H1 (cell line): ENCODE measurements at regions of chr7 and their contacts with region 1.

Region 1: DNA sequence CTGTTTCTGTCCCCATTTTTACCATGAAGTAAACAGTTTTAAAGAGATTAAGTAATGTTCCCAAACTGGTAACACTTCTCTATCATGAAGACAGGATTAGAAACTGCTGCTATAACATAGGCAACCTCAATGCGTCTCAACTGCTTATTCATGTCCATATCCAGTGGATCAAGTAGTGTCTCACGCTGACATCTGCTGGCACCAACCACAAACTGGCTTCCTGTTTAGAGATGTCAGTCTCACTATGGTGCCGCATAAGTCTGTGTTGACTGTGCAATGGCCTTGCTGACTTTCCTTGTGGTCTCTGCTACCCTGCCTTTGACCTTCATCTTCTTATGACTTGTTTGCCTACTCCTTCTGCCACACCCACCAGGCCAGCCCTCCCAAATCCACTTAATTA is 369.6 kb upstream of the DPP6 start:
- DNase-seq: no peak
- H3K4me3 ChIP-seq: no peak overlapping the region
- H3K27ac ChIP-seq: no peak overlapping the region
- H3K4me1 ChIP-seq: no peaks in the 10 kb centered on the region
- H3K27me3 ChIP-seq: peaks cover 0 to 1% (median 0%) of the 10 kb centered on the region in 4 experiments; a peak in 1 of 7 replicates
- CTCF ChIP-seq: peak in 2 of 3 experiments; percentile 23 to 41; a peak in 2 of 4 replicates
- EP300 ChIP-seq: no peak
- POLR2A ChIP-seq: no peak
- RAD21 ChIP-seq: peak; percentile 57 to 66

Region 2: GRCh38 chr7:153381275-153382040 is 301.2 kb before region 1 on chr7:
- CTCF ChIA-PET with region 1: interaction called, 23 read pairs
- POLR2A ChIA-PET with region 1: no interaction called
- DNase-seq: peak; percentile 25 to 70
- H3K4me3 ChIP-seq: peak overlapping the region in 3 of 4 experiments; percentile 20 to 50 (median 34); a peak in 5 of 8 replicates
- H3K27ac ChIP-seq: no peak overlapping the region
- H3K4me1 ChIP-seq: peaks cover 0 to 2% (median 0%) of the 10 kb centered on the region in 4 experiments; a peak in 3 of 7 replicates
- H3K27me3 ChIP-seq: no peaks in the 10 kb centered on the region
- CTCF ChIP-seq: peak; percentile 81 to 90 (median 82)
- EP300 ChIP-seq: no peak
- POLR2A ChIP-seq: no peak
- RAD21 ChIP-seq: peak; percentile 98 to 99

Region 3: DNA sequence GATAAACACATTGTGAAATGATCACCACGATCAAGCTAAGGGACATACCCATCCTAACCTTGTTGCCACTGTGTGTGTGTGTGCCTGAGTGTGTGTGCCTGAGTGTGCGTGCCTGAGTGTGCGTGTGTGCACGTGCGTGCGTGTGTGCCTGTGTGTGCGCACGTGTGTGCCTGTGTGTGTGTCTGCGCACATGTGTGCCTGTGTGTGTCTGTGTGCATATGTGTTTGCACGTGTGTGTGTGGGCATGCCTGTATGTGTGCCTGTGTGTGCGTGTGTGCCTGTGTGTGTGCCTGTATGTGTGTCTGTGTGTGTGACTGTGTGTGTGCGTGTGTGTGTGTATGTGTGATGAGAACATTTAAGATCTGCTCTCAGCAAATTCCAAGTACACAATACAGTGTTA is 125.5 kb after region 1 on chr7:
- CTCF ChIA-PET with region 1: no interaction called
- POLR2A ChIA-PET with region 1: no interaction called
- DNase-seq: no peak
- H3K4me3 ChIP-seq: no peak overlapping the region
- H3K27ac ChIP-seq: no peak overlapping the region
- H3K4me1 ChIP-seq: no peaks in the 10 kb centered on the region
- H3K27me3 ChIP-seq: no peaks in the 10 kb centered on the region
- CTCF ChIP-seq: no peak
- EP300 ChIP-seq: no peak
- POLR2A ChIP-seq: no peak
- RAD21 ChIP-seq: no peak